ENCODE measurements at regions of chr19 and their contacts with region 1.

Region 1: DNA sequence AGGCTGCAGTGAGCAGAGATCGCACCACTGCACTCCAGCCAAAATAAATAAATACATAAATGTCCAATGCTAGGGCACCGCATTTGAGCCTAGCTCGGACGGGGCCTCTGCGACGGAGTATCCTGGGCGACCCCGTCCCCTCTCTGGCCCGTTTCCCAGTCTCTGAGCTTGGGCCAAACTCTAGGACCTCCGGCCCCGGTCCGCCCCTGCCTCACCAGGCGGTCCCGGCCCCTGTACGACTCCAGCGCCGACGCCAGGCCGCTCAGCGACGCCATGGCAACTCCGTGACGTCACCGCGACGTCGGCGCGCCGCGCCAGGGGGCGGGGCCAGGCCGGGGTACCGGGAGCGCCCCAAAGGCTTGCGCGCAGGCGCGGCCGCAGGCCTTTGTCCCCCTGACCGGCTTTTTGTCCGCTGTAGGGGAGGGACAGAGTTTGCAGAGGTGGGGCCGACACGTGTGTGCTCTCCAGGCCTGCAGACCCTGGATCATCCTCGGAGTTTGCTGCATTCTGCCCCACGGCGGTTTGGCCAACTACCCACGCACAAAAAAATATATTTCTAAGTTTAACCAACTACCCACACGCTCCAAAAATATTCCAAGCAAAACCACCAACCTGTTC is at the start of gene PEX11G:
- DNase-seq: peak; percentile 93 to 96
- H3K4me3 ChIP-seq: peak within 1 kb of the TSS; percentile 60
- H3K4me3 Mint-ChIP-seq: peak within 1 kb of the TSS; percentile 77
- H3K27ac Mint-ChIP-seq: peak within 1 kb of the TSS; percentile 96
- H3K4me1 ChIP-seq: peaks cover 4% of the 10 kb centered on the region; the same call in 1 of the 2 replicates
- H3K4me1 Mint-ChIP-seq: peaks cover 7% of the 10 kb centered on the region
- H3K27me3 ChIP-seq: no peaks in the 10 kb centered on the region
- H3K27me3 Mint-ChIP-seq: no peaks in the 10 kb centered on the region
- CTCF ChIP-seq: no peak
- total RNA-seq, gene PEX11G: 3.9 TPM in 2 replicates

Region 2: DNA sequence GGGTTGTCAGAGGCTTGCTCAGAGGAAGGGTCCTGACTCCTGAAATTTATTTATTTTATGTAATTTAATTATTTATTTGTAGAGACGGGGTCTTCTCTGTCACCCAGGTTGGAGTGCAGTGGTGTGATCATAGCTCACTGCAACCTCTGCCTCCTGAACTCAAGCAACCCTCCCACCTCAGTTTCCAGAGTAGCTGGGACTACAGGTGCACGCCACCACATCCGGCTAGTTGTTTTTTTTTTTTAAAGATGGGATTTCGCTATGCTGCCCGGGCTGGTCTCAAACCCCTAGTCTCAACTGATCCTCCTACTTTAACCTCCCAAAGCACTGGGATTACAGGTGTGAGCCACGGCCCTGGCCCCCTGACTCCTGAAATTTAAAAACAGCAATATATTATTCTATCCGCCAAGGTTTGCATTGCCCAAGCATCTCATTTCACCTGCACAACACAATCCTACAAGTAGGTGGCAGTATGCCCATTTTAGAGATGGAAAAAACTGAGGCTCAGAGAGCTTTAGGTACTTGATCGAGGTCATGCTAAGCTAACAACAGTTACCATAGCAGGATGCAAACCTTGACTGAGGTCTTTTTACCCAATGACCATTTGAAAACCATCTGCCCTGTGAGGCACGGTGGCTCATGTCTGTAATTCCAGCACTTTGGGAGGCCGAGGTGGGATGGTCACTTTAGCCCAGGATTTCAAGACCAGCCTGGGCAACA is 122.0 kb before region 1 on chr19:
- CTCF ChIA-PET with region 1: no interaction called
- POLR2A ChIA-PET with region 1: interaction called, 10 read pairs
- intact Hi-C with region 1: no loop called
- DNase-seq: peak in 1 of 2 experiments; percentile 47
- H3K4me3 ChIP-seq: no peak overlapping the region
- H3K4me3 Mint-ChIP-seq: no peak overlapping the region
- H3K27ac Mint-ChIP-seq: no peak overlapping the region
- H3K4me1 ChIP-seq: no peaks in the 10 kb centered on the region
- H3K4me1 Mint-ChIP-seq: peaks cover 7% of the 10 kb centered on the region
- H3K27me3 ChIP-seq: no peaks in the 10 kb centered on the region
- H3K27me3 Mint-ChIP-seq: peaks cover 14% of the 10 kb centered on the region
- CTCF ChIP-seq: peak; percentile 9 to 56

Region 3: GRCh38 chr19:7417671-7418324 is 71.0 kb before region 1 on chr19:
- CTCF ChIA-PET with region 1: no interaction called
- POLR2A ChIA-PET with region 1: interaction called, 14 read pairs
- intact Hi-C with region 1: no loop called
- DNase-seq: no peak
- H3K4me3 ChIP-seq: no peak overlapping the region
- H3K4me3 Mint-ChIP-seq: peak overlapping the region; percentile 27
- H3K27ac Mint-ChIP-seq: peak overlapping the region; percentile 70
- H3K4me1 ChIP-seq: peaks cover 21% of the 10 kb centered on the region
- H3K4me1 Mint-ChIP-seq: peaks cover 33% of the 10 kb centered on the region
- H3K27me3 ChIP-seq: no peaks in the 10 kb centered on the region
- H3K27me3 Mint-ChIP-seq: no peaks in the 10 kb centered on the region
- CTCF ChIP-seq: no peak

Region 4: DNA sequence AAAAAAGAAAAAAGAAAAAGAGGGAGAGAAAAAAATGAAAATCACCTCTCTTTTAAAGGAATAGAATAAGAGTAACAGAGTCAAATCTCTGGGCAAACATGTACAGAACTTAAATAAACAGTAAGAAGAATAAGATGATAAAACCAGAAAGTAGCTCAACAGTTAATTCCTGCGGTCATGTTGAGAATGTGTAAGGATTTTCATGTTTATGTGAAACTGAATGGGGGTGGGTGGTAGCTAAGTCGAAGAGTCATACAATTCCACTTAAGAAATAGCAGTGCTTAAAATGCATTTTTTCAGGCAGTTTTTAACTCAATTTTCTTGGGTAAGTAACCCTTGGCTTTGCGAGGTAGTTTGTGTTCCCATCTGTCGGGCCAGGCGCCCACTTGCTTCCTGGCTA is 60.9 kb before region 1 on chr19:
- CTCF ChIA-PET with region 1: no interaction called
- POLR2A ChIA-PET with region 1: no interaction called
- intact Hi-C with region 1: loop called (anchors 2 kb)
- DNase-seq: no peak
- H3K4me3 ChIP-seq: no peak overlapping the region
- H3K4me3 Mint-ChIP-seq: no peak overlapping the region
- H3K27ac Mint-ChIP-seq: no peak overlapping the region
- H3K4me1 ChIP-seq: peaks cover 56% of the 10 kb centered on the region
- H3K4me1 Mint-ChIP-seq: peaks cover 8% of the 10 kb centered on the region
- H3K27me3 ChIP-seq: no peaks in the 10 kb centered on the region
- H3K27me3 Mint-ChIP-seq: no peaks in the 10 kb centered on the region
- CTCF ChIP-seq: no peak

Region 5: GRCh38 chr19:7535035-7535992 is 46.5 kb after region 1 on chr19 and contains the start of gene PNPLA6:
- CTCF ChIA-PET with region 1: interaction called, 7 read pairs
- POLR2A ChIA-PET with region 1: no interaction called
- intact Hi-C with region 1: loop called (anchors 1 kb)
- DNase-seq: peak; percentile 93
- H3K4me3 ChIP-seq: peak within 1 kb of the TSS; percentile 69
- H3K4me3 Mint-ChIP-seq: peak within 1 kb of the TSS; percentile 97
- H3K27ac Mint-ChIP-seq: peak within 1 kb of the TSS; percentile 89
- H3K4me1 ChIP-seq: peaks cover 9% of the 10 kb centered on the region
- H3K4me1 Mint-ChIP-seq: no peaks in the 10 kb centered on the region
- H3K27me3 ChIP-seq: no peaks in the 10 kb centered on the region
- H3K27me3 Mint-ChIP-seq: no peaks in the 10 kb centered on the region
- CTCF ChIP-seq: no peak
- total RNA-seq, gene PNPLA6: 67.6 and 79.2 TPM in 2 replicates